ENCODE measurements at regions of chr6 and their contacts with region 1.

Region 1: GRCh38 chr6:19851241-19852089 is 14.3 kb downstream of the ID4 start:
- DNase-seq: peak; percentile 84
- ATAC-seq: peak; percentile 99
- H3K4me3 ChIP-seq: no peak overlapping the region
- H3K27ac ChIP-seq: no peak overlapping the region
- H3K4me1 ChIP-seq: peaks cover 6% of the 10 kb centered on the region
- H3K27me3 ChIP-seq: no peaks in the 10 kb centered on the region
- CTCF ChIP-seq: peak; percentile 98
- POLR2A ChIP-seq: 0 out of 2 replicates have a peak, but pooled peaks have one; percentile 53
- RAD21 ChIP-seq: peak; percentile 99

Region 2: GRCh38 chr6:18752278-18753068 is 1099.0 kb before region 1 on chr6:
- CTCF ChIA-PET with region 1: no interaction called
- POLR2A ChIA-PET with region 1: no interaction called
- dilution Hi-C with region 1: no loop called
- in situ Hi-C with region 1: loop called (anchors 25 kb)
- intact Hi-C with region 1: loop called (anchors 1 kb)
- DNase-seq: no peak
- ATAC-seq: no peak
- H3K4me3 ChIP-seq: no peak overlapping the region
- H3K27ac ChIP-seq: no peak overlapping the region
- H3K4me1 ChIP-seq: no peaks in the 10 kb centered on the region
- H3K27me3 ChIP-seq: no peaks in the 10 kb centered on the region
- CTCF ChIP-seq: no peak
- POLR2A ChIP-seq: no peak
- RAD21 ChIP-seq: no peak

Region 3: DNA sequence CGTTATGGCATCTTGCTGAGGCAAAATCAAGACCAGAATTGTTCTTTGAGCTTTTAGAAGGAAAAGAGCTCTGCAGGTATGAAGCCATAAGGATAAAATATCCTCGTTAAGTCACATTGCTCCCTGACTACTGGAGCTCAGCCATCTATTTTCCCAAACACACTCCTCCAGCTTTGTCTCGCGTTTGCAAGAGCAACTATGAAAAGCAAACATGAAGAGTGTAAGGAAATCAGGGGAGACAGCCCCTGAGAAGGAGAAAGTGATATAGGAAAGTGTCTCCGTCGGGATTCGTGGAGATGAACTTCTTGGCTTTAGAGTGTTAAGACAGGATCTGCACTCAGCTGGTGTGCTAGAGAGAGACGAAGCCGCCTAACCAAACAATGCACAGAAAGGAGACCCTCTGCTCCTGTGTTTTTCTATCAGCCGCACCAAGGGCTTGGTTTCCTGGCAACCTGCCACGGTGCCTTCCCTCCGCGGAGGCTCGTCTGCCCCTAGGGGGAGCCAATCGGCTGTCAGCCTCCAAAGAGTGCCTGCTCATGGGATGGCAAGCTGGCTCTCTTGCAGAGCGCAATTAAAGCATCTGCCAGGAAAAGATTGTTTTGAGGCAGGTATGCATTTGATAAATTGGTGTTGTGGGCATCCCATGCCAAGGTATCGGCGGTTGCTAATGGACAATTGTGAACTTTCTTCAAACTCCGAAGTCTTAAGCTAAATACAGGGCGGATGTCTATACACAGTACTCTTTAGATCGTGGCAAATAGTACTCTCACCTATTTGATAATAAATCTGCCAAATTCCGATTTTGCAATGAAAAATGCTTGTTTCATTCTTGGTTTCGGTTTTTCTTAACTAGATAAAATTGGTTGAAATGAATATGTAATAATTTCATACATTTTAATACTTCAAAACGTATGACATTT is 861.1 kb before region 1 on chr6:
- CTCF ChIA-PET with region 1: no interaction called
- POLR2A ChIA-PET with region 1: no interaction called
- dilution Hi-C with region 1: no loop called
- in situ Hi-C with region 1: loop called (anchors 25 kb)
- intact Hi-C with region 1: no loop called
- DNase-seq: peak; percentile 20
- ATAC-seq: no peak
- H3K4me3 ChIP-seq: no peak overlapping the region
- H3K27ac ChIP-seq: no peak overlapping the region
- H3K4me1 ChIP-seq: no peaks in the 10 kb centered on the region
- H3K27me3 ChIP-seq: no peaks in the 10 kb centered on the region
- CTCF ChIP-seq: peak; percentile 44
- POLR2A ChIP-seq: no peak
- RAD21 ChIP-seq: peak; percentile 51

Region 4: GRCh38 chr6:19812512-19813119 is 38.8 kb before region 1 on chr6:
- CTCF ChIA-PET with region 1: interaction called, 6 read pairs
- POLR2A ChIA-PET with region 1: no interaction called
- dilution Hi-C with region 1: no loop called
- in situ Hi-C with region 1: no loop called
- intact Hi-C with region 1: loop called (anchors 2 kb)
- DNase-seq: peak; percentile 61
- ATAC-seq: peak; percentile 87
- H3K4me3 ChIP-seq: no peak overlapping the region
- H3K27ac ChIP-seq: no peak overlapping the region
- H3K4me1 ChIP-seq: no peaks in the 10 kb centered on the region
- H3K27me3 ChIP-seq: no peaks in the 10 kb centered on the region; the same call in 1 of the 2 replicates
- CTCF ChIP-seq: peak; percentile 67
- POLR2A ChIP-seq: no peak
- RAD21 ChIP-seq: peak; percentile 62

Measured in IMR-90 (cell line).